ENCODE measurements at regions of chr16 and their contacts with region 1.

Region 1: GRCh38 chr16:74984535-74985296 is at the start of gene WDR59:
- DNase-seq: peak; percentile 91 to 100 (median 99)
- ATAC-seq: peak; percentile 97 to 99 (median 99)
- H3K4me3 ChIP-seq: peak within 1 kb of the TSS; percentile 97 to 99
- H3K4me3 Mint-ChIP-seq: peak within 1 kb of the TSS; percentile 81 to 97 (median 89)
- H3K27ac ChIP-seq: peak within 1 kb of the TSS; percentile 71
- H3K27ac Mint-ChIP-seq: peak within 1 kb of the TSS; percentile 76 to 91
- H3K4me1 ChIP-seq: peaks cover 7 to 26% of the 10 kb centered on the region in 2 experiments
- H3K4me1 Mint-ChIP-seq: peaks cover 13 to 25% (median 21%) of the 10 kb centered on the region in 3 donors
- H3K27me3 ChIP-seq: peaks cover 0 to 3% of the 10 kb centered on the region in 2 experiments
- H3K27me3 Mint-ChIP-seq: no peaks in the 10 kb centered on the region
- total RNA-seq, gene WDR59: 97.7 to 120 (median 108) TPM

Region 2: DNA sequence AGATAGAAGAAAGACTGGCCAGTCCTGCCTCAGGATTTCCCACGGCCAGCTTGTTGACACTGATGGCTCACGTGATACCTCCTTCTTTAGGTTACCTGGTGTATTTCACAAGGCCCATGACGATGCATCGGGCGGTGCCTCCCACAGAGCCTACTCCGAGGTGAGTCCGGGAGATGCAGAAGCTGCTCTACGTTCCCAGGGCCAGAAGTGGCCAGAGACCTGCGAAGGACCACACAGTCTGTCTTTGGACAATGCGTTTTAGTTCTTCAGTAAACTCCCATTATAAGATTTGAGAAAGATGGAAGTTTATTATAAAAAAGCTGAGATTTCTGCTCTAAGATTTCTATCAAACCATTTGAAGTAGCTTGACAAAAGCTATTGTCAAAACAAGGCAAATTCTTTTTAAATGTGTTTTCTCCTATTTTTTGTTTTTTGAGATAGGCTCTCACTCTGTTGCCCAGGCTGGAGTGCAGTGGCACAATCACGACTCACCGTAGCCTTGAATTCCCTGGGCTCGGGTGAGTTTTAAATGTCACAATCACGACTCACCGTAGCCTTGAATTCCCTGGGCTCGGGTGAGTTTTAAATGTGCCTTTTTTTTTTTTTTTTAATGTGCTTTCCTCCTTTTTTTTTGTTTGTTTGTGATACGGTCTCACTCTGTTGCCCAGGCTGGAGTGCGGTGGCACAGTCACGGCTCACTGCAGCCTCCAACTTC is 140.8 kb before region 1 on chr16:
- CTCF ChIA-PET with region 1: no interaction called
- POLR2A ChIA-PET with region 1: no interaction called
- DNase-seq: no peak
- ATAC-seq: no peak
- H3K4me3 ChIP-seq: no peak overlapping the region
- H3K4me3 Mint-ChIP-seq: no peak overlapping the region
- H3K27ac ChIP-seq: no peak overlapping the region
- H3K27ac Mint-ChIP-seq: no peak overlapping the region
- H3K4me1 ChIP-seq: no peaks in the 10 kb centered on the region
- H3K4me1 Mint-ChIP-seq: peaks cover 0 to 3% (median 2%) of the 10 kb centered on the region in 3 donors
- H3K27me3 ChIP-seq: no peaks in the 10 kb centered on the region
- H3K27me3 Mint-ChIP-seq: no peaks in the 10 kb centered on the region

Region 3: GRCh38 chr16:74954763-74955162 is 30.0 kb before region 1 on chr16:
- CTCF ChIA-PET with region 1: no interaction called
- POLR2A ChIA-PET with region 1: interaction called in 1 of 2 experiments, 14 read pairs
- DNase-seq: no peak
- ATAC-seq: no peak
- H3K4me3 ChIP-seq: no peak overlapping the region
- H3K4me3 Mint-ChIP-seq: no peak overlapping the region
- H3K27ac ChIP-seq: no peak overlapping the region
- H3K27ac Mint-ChIP-seq: no peak overlapping the region
- H3K4me1 ChIP-seq: no peaks in the 10 kb centered on the region
- H3K4me1 Mint-ChIP-seq: peaks cover 0 to 2% (median 0%) of the 10 kb centered on the region in 3 donors
- H3K27me3 ChIP-seq: no peaks in the 10 kb centered on the region
- H3K27me3 Mint-ChIP-seq: no peaks in the 10 kb centered on the region

Region 4: GRCh38 chr16:74973153-74973703 is 11.5 kb before region 1 on chr16:
- CTCF ChIA-PET with region 1: interaction called in 1 of 2 experiments, 5 read pairs
- POLR2A ChIA-PET with region 1: interaction called in 1 of 2 experiments, 10 read pairs
- DNase-seq: no peak
- ATAC-seq: no peak
- H3K4me3 ChIP-seq: no peak overlapping the region
- H3K4me3 Mint-ChIP-seq: no peak overlapping the region
- H3K27ac ChIP-seq: no peak overlapping the region
- H3K27ac Mint-ChIP-seq: no peak overlapping the region
- H3K4me1 ChIP-seq: no peaks in the 10 kb centered on the region
- H3K4me1 Mint-ChIP-seq: peaks cover 4 to 7% (median 6%) of the 10 kb centered on the region in 3 donors
- H3K27me3 ChIP-seq: no peaks in the 10 kb centered on the region
- H3K27me3 Mint-ChIP-seq: no peaks in the 10 kb centered on the region

Region 5: DNA sequence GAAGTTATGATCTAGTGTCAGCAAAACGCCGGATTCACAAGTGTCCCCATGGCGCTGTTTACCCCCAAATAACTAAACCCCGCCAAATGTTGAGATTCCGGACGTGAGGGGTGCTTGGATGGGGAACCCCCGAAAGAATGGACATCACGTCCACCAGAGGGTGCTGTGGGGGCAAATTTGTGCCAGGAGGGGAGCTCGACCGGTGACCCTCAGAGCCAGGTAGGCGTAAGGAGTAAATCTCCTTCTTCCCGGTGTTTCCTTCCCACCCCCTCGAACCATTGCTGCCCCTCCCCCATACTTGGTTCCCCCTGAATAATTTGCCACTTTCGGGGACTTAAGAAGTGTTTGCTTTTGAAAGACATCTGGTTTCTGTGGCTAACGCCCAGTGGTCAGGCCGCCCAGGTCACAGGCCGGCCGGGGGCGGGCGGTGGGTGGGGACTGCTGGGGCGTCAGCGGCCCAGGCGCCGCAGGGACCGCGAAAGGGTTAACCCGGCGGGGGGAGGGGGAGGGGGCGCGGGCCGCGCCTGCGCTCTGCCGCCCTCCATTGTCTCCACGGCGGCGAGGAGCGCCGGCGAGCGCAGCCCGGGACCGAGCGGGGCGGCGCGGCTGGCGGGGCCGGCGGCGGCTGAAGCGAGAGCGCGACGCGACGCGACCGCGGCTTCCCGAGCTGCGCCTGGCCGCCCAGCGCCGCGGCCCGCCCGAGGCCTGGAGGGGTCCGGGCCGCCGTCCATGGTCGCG is 13.9 kb after region 1 on chr16 and contains the start of gene ZNRF1:
- CTCF ChIA-PET with region 1: interaction called, 4 to 17 read pairs
- POLR2A ChIA-PET with region 1: interaction called in 1 of 2 experiments, 4 read pairs
- DNase-seq: peak; percentile 48 to 87 (median 70)
- ATAC-seq: peak; percentile 83 to 92 (median 86)
- H3K4me3 ChIP-seq: peak within 1 kb of the TSS; percentile 60 to 62
- H3K4me3 Mint-ChIP-seq: peak within 1 kb of the TSS; percentile 80 to 86 (median 81)
- H3K27ac ChIP-seq: peak within 1 kb of the TSS; percentile 47
- H3K27ac Mint-ChIP-seq: peak within 1 kb of the TSS; percentile 45 to 71
- H3K4me1 ChIP-seq: peaks cover 6 to 23% of the 10 kb centered on the region in 2 experiments
- H3K4me1 Mint-ChIP-seq: peaks cover 12 to 20% (median 17%) of the 10 kb centered on the region in 3 donors
- H3K27me3 ChIP-seq: peaks cover 0 to 10% of the 10 kb centered on the region in 2 experiments
- H3K27me3 Mint-ChIP-seq: peaks cover 3 to 5% of the 10 kb centered on the region in 2 donors
- total RNA-seq, gene ZNRF1: 5.5 to 7.8 (median 7.5) TPM